ENCODE measurements at regions of chr13 and their contacts with region 1.

Region 1: GRCh38 chr13:28819735-28820098 is 422 bp upstream of the MTUS2 start:
- DNase-seq: peak; percentile 74 to 92
- ATAC-seq: peak; percentile 83
- H3K4me3 ChIP-seq: peak overlapping the region; percentile 90 to 99
- H3K27ac ChIP-seq: peak overlapping the region; percentile 24 to 53
- H3K4me1 ChIP-seq: no peaks in the 10 kb centered on the region
- H3K27me3 ChIP-seq: no peaks in the 10 kb centered on the region

Region 2: GRCh38 chr13:28753243-28753887 is 66.4 kb before region 1 on chr13:
- intact Hi-C with region 1: no loop called
- DNase-seq: peak; percentile 79 to 86
- ATAC-seq: peak; percentile 86
- H3K4me3 ChIP-seq: no peak overlapping the region
- H3K27ac ChIP-seq: peak overlapping the region in 1 of 2 donors; percentile 82
- H3K4me1 ChIP-seq: no peaks in the 10 kb centered on the region
- H3K27me3 ChIP-seq: no peaks in the 10 kb centered on the region

Region 3: GRCh38 chr13:28935104-28935503 is 115.4 kb after region 1 on chr13:
- intact Hi-C with region 1: loop called in 1 of 2 experiments (anchors 5 kb)
- DNase-seq: no peak
- ATAC-seq: no peak
- H3K4me3 ChIP-seq: no peak overlapping the region
- H3K27ac ChIP-seq: no peak overlapping the region
- H3K4me1 ChIP-seq: peaks cover 2% of the 10 kb centered on the region in 2 donors
- H3K27me3 ChIP-seq: no peaks in the 10 kb centered on the region

Region 4: GRCh38 chr13:29260683-29261082 is 441.0 kb after region 1 on chr13:
- intact Hi-C with region 1: loop called (anchors 2 to 5 kb)
- DNase-seq: no peak
- ATAC-seq: no peak
- H3K4me3 ChIP-seq: no peak overlapping the region
- H3K27ac ChIP-seq: no peak overlapping the region
- H3K4me1 ChIP-seq: no peaks in the 10 kb centered on the region
- H3K27me3 ChIP-seq: no peaks in the 10 kb centered on the region

Region 5: DNA sequence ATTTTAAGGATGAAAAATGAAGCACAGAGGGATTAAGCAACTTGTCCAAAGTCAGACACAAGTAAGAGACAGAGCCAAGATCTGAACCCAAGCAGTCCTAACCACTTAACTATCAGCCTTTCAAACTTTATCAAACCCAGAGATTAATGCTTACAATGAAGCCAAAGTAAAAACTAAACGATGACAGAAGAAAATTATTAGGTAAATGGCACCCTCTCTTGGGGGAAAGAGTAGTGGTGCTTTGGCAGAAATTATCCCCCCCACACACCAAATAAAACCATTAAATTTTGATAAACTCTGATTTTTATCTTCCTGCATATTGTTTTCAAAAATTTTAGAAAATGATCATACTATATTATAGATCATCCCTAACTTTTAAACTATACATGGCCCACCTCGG is 446.5 kb after region 1 on chr13:
- intact Hi-C with region 1: loop called (anchors 2 to 5 kb)
- DNase-seq: no peak
- ATAC-seq: no peak
- H3K4me3 ChIP-seq: no peak overlapping the region
- H3K27ac ChIP-seq: no peak overlapping the region
- H3K4me1 ChIP-seq: no peaks in the 10 kb centered on the region
- H3K27me3 ChIP-seq: no peaks in the 10 kb centered on the region

Region 6: GRCh38 chr13:29362849-29363604 is 543.3 kb after region 1 on chr13:
- intact Hi-C with region 1: loop called (anchors 5 kb)
- DNase-seq: peak in 1 of 2 donors; percentile 50
- ATAC-seq: peak; percentile 74
- H3K4me3 ChIP-seq: no peak overlapping the region
- H3K27ac ChIP-seq: peak overlapping the region in 1 of 2 donors; percentile 17
- H3K4me1 ChIP-seq: peaks cover 0 to 2% of the 10 kb centered on the region in 2 donors
- H3K27me3 ChIP-seq: no peaks in the 10 kb centered on the region

Region 7: DNA sequence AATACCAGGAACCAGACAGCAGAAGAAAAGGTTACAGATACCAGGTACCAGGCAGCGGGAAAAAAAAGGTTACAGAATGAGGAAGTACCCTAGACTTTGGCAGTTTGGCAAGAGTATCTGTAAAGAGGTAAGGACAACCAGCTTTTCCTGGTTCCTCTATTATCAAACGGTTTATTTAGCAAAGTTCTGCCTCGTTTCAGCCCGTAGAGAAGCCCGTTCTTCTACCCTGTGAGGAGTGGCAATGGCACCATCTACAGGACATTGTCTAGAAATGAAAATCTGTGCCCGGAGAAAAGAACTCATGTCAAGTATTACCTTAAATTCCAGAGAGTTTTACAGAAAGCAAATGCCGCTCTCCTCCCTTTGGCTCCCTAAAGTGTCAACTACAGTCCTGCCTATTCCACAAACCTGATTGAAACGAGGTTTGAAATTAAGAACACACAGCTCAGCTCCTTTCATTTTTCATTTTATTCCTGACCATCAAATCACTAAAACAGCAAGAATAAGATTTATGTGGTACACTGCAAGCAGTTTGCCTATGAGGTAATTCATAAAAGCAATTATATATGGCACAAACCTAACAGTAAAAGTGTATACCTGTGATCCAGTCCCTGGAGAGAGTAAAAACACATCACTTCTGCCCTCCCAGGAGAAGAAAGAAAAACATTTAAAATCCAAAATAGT is 549.5 kb after region 1 on chr13:
- intact Hi-C with region 1: loop called (anchors 5 kb)
- DNase-seq: no peak
- ATAC-seq: no peak
- H3K4me3 ChIP-seq: no peak overlapping the region
- H3K27ac ChIP-seq: no peak overlapping the region
- H3K4me1 ChIP-seq: no peaks in the 10 kb centered on the region
- H3K27me3 ChIP-seq: no peaks in the 10 kb centered on the region